ENCODE measurements at regions of chr3 and their contacts with region 1.

Region 1: DNA sequence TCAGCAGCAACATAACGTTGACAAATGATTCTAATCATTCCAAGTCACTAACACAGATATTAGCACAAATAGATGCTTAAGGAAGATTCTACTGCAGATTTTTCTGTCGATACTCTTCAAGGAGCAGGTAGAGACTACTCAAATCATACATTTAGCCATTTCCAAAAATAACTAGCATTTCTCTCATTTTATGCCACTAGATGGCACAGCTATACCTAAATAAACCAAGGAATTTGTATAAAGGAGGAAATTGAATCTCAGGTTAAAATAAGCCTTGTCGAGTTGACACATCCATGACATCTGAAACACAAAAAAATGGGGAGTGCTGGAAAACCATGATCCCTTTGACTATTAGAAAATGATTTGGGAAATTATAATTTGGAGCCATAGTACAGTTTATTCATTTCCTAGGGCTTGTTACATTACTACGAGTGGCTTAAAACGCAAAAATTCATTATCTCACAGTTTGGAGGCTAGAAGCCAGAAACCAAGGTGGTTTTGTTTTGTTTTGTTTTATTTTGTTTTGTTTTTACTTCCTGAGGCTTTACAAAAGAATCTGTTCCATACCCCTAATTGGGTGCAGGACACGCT is 59.5 kb upstream of the STRIT1 start:
- DNase-seq: no peak
- ATAC-seq: peak; percentile 52

Region 2: DNA sequence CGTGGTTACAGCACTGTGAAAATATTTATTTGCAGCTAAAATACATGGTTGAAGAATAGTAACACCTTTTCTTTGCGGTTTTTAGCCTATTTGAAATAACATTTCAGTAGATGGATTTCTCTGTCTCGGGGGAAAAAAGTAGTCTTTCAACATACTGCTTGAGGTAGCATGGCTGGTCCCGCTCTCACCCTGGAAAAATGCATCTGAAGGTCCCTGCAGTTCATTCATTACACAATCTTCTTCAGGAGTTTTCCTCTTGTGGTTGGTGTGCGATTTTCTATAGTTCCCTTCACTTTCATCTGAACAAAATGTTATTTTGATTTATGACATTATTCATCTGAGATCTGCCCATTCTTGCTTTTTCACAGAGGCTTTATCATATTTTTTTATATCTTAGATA is 135.4 kb before region 1 on chr3:
- intact Hi-C with region 1: no loop called
- DNase-seq: no peak
- ATAC-seq: no peak

Region 3: GRCh38 chr3:155701882-155702465 is 349.0 kb after region 1 on chr3:
- intact Hi-C with region 1: loop called (anchors 10 kb)
- DNase-seq: no peak
- ATAC-seq: peak; percentile 80